ENCODE measurements at regions of chr1 and their contacts with region 1.

Region 1: GRCh38 chr1:212743901-212744475 is 44.3 kb upstream of the BATF3 start:
- DNase-seq: no peak
- H3K4me3 ChIP-seq: no peak overlapping the region
- H3K27ac ChIP-seq: no peak overlapping the region
- H3K4me1 ChIP-seq: no peaks in the 10 kb centered on the region
- H3K27me3 ChIP-seq: no peaks in the 10 kb centered on the region
- CTCF ChIP-seq: no peak
- POLR2A ChIP-seq: no peak

Region 2: GRCh38 chr1:212514056-212514614 is 229.9 kb before region 1 on chr1:
- intact Hi-C with region 1: no loop called
- DNase-seq: no peak
- H3K4me3 ChIP-seq: no peak overlapping the region
- H3K27ac ChIP-seq: no peak overlapping the region
- H3K4me1 ChIP-seq: no peaks in the 10 kb centered on the region
- H3K27me3 ChIP-seq: no peaks in the 10 kb centered on the region
- CTCF ChIP-seq: no peak
- POLR2A ChIP-seq: no peak

Region 3: GRCh38 chr1:212721388-212722247 is 22.4 kb before region 1 on chr1:
- intact Hi-C with region 1: loop called (anchors 2 kb)
- DNase-seq: no peak
- H3K4me3 ChIP-seq: no peak overlapping the region
- H3K27ac ChIP-seq: no peak overlapping the region
- H3K4me1 ChIP-seq: no peaks in the 10 kb centered on the region
- H3K27me3 ChIP-seq: no peaks in the 10 kb centered on the region
- CTCF ChIP-seq: no peak
- POLR2A ChIP-seq: no peak

Region 4: DNA sequence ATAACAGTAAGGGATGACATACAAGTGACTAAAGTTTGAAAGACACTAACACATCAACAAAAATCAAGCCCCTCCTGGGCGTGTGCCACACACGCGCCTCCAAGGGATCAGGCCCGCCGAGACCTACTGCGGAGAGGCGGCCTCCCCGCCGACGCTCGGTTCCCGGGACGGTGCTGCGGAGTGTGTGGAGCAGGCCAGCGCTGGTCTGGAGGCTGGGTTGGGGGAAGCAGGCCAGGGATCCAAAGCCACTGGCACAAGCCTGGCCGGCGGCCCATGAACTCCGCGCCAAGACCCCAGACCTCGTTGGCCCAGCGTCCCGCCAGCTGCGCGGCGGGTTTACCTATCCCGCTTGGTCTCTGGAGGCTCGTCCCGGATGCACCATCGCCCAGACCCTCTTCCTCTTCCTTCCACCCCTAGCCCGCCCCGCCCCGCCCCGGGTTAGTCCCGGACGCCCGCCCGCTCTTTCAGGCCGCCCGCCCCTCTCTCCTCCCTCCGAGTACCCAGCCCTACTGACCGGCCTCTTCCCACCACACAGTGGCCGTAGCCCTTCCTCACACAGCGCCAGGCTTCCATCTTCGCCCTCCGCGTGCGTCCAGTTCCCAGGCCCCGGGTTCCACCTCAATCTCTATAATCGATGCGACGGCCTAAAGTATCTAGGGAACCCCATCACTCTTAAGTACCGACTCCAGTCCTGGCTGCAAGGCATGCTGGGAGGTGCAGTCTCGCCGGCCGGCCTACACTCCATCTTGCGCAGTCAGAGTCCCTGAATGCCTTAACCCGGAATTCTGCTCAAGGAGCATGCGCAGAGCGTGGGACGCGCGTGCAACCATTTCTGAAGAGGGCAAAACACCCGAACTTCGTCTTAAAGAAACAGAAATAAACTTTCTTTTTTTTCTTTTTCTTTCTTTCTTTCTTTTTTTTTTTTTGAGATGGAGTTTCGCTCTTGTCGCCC is 271.4 kb after region 1 on chr1 and contains the start of gene ANGEL2:
- intact Hi-C with region 1: no loop called
- DNase-seq: peak; percentile 95 to 96
- H3K4me3 ChIP-seq: peak within 1 kb of the TSS; percentile 88 to 91
- H3K27ac ChIP-seq: peak within 1 kb of the TSS; percentile 92 to 94
- H3K4me1 ChIP-seq: peaks cover 0 to 6% of the 10 kb centered on the region in 2 donors
- H3K27me3 ChIP-seq: no peaks in the 10 kb centered on the region
- CTCF ChIP-seq: peak in 2 of 4 experiments; percentile 1 to 5
- POLR2A ChIP-seq: peak; percentile 49 to 59
- total RNA-seq, gene ANGEL2: 37.1 to 79.9 (median 59.4) TPM